ENCODE measurements at regions of chrX and their contacts with region 1.

Region 1: GRCh38 chrX:107672955-107673378 is 44.7 kb downstream of the PRPS1 start:
- DNase-seq: peak; percentile 88
- H3K4me3 Mint-ChIP-seq: peak overlapping the region; percentile 45
- H3K27ac Mint-ChIP-seq: peak overlapping the region; percentile 90
- H3K4me1 Mint-ChIP-seq: peaks cover 24% of the 10 kb centered on the region
- H3K27me3 Mint-ChIP-seq: peaks cover 67% of the 10 kb centered on the region
- CTCF ChIP-seq: peak; percentile 45

Region 2: DNA sequence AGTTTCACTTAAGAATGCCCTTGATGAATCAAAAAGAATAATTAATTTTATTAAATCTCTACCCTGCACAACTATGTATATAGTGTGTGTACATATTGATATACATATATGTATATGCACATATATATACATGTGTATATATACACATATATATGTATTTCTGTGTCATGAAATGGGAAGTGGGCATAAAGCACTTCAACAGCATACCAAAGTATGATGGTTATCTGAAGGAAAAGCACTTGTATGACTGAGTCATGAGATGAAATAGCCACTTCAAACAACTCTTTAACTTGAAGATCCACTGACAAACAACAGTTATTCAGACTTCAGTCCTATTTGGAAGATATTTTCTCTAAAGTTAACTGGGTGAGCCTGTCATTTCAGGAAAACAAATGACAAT is 930.2 kb before region 1 on chrX:
- CTCF ChIA-PET with region 1: no interaction called
- POLR2A ChIA-PET with region 1: no interaction called
- intact Hi-C with region 1: no loop called
- DNase-seq: no peak
- H3K4me3 Mint-ChIP-seq: no peak overlapping the region
- H3K27ac Mint-ChIP-seq: no peak overlapping the region
- H3K4me1 Mint-ChIP-seq: no peaks in the 10 kb centered on the region
- H3K27me3 Mint-ChIP-seq: no peaks in the 10 kb centered on the region
- CTCF ChIP-seq: no peak

Region 3: DNA sequence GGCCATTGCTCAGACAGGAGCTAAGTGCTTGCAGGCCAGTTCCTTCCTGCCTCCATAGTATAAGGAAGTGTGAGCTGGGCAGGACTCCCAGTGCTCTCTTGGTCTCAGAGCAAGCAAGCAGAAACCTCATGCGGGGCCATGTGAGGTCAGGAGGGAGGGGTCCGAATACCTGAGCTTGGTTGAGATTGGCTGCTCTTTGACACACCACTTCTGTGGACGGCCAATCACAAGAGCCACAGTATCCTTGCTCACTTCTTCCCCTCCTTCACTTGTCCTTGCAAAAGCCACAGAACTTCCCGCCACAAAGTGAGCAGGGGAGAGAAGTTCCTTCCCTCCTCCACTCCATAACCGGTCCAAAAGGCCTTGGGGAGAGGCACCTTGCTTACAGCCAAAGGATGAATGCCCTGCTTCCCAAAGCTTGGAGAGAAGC is 12.0 kb after region 1 on chrX:
- CTCF ChIA-PET with region 1: interaction called, 12 read pairs
- POLR2A ChIA-PET with region 1: interaction called, 54 read pairs
- intact Hi-C with region 1: no loop called
- DNase-seq: peak; percentile 93
- H3K4me3 Mint-ChIP-seq: no peak overlapping the region
- H3K27ac Mint-ChIP-seq: no peak overlapping the region
- H3K4me1 Mint-ChIP-seq: peaks cover 28% of the 10 kb centered on the region
- H3K27me3 Mint-ChIP-seq: peaks cover 70% of the 10 kb centered on the region
- CTCF ChIP-seq: no peak

Region 4: GRCh38 chrX:107710617-107711391 is 37.8 kb after region 1 on chrX:
- CTCF ChIA-PET with region 1: interaction called, 157 read pairs
- POLR2A ChIA-PET with region 1: interaction called, 679 read pairs
- intact Hi-C with region 1: loop called (anchors 1 kb)
- DNase-seq: peak; percentile 86
- H3K4me3 Mint-ChIP-seq: peak overlapping the region; percentile 20
- H3K27ac Mint-ChIP-seq: peak overlapping the region; percentile 97
- H3K4me1 Mint-ChIP-seq: peaks cover 14% of the 10 kb centered on the region
- H3K27me3 Mint-ChIP-seq: peaks cover 34% of the 10 kb centered on the region
- CTCF ChIP-seq: no peak

Region 5: GRCh38 chrX:107731831-107732502 is 59.0 kb after region 1 on chrX:
- CTCF ChIA-PET with region 1: interaction called, 10 read pairs
- POLR2A ChIA-PET with region 1: interaction called, 19 read pairs
- intact Hi-C with region 1: loop called (anchors 5 kb)
- DNase-seq: peak; percentile 92
- H3K4me3 Mint-ChIP-seq: peak overlapping the region; percentile 24
- H3K27ac Mint-ChIP-seq: no peak overlapping the region
- H3K4me1 Mint-ChIP-seq: peaks cover 15% of the 10 kb centered on the region
- H3K27me3 Mint-ChIP-seq: peaks cover 65% of the 10 kb centered on the region
- CTCF ChIP-seq: no peak

Region 6: GRCh38 chrX:107747596-107748161 is 74.7 kb after region 1 on chrX:
- CTCF ChIA-PET with region 1: interaction called, 9 read pairs
- POLR2A ChIA-PET with region 1: interaction called, 83 read pairs
- intact Hi-C with region 1: no loop called
- DNase-seq: peak; percentile 68
- H3K4me3 Mint-ChIP-seq: peak overlapping the region; percentile 5
- H3K27ac Mint-ChIP-seq: peak overlapping the region; percentile 88
- H3K4me1 Mint-ChIP-seq: peaks cover 27% of the 10 kb centered on the region
- H3K27me3 Mint-ChIP-seq: peaks cover 61% of the 10 kb centered on the region
- CTCF ChIP-seq: no peak

Region 7: DNA sequence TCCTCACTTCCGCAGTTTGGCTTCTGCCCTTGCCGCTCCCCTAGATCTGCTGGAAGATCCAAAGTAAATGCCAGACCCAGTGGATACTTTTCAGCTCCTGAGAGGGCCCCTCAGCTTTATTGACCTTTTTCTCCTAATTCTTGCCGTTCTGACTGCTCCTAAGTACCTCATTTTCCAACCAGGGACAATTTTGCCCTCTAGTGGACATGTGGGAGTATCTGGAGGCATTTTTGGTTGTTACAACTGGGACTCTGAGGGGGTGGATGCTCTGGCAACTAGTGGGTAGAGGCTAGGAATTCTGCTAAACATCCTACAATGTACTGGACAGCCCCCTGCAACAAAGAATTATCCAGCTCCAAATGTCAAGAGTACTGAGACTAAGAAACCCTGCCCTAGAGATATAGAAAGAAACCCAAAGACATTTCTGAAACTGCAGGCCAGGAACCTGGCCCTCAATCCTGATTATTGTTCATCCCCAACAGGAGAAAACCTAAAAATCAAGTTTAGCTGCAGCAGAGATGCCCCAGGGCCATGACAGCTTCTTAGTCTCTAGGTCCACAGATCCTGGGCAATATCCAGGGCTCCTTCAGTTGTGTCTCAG is 305.8 kb after region 1 on chrX:
- CTCF ChIA-PET with region 1: no interaction called
- POLR2A ChIA-PET with region 1: no interaction called
- intact Hi-C with region 1: loop called (anchors 10 kb)
- DNase-seq: peak; percentile 59
- H3K4me3 Mint-ChIP-seq: no peak overlapping the region
- H3K27ac Mint-ChIP-seq: peak overlapping the region; percentile 11
- H3K4me1 Mint-ChIP-seq: no peaks in the 10 kb centered on the region
- H3K27me3 Mint-ChIP-seq: peaks cover 74% of the 10 kb centered on the region
- CTCF ChIP-seq: peak; percentile 61

Region 8: GRCh38 chrX:108138814-108139702 is 466.1 kb after region 1 on chrX:
- CTCF ChIA-PET with region 1: no interaction called
- POLR2A ChIA-PET with region 1: no interaction called
- intact Hi-C with region 1: no loop called
- DNase-seq: no peak
- H3K4me3 Mint-ChIP-seq: no peak overlapping the region
- H3K27ac Mint-ChIP-seq: no peak overlapping the region
- H3K4me1 Mint-ChIP-seq: no peaks in the 10 kb centered on the region
- H3K27me3 Mint-ChIP-seq: peaks cover 39% of the 10 kb centered on the region
- CTCF ChIP-seq: peak; percentile 44

Measured in MCF 10A (cell line).